Endothelial cell of umbilical vein (primary cell): ENCODE measurements at regions of chr15 and their contacts with region 1.

Region 1: DNA sequence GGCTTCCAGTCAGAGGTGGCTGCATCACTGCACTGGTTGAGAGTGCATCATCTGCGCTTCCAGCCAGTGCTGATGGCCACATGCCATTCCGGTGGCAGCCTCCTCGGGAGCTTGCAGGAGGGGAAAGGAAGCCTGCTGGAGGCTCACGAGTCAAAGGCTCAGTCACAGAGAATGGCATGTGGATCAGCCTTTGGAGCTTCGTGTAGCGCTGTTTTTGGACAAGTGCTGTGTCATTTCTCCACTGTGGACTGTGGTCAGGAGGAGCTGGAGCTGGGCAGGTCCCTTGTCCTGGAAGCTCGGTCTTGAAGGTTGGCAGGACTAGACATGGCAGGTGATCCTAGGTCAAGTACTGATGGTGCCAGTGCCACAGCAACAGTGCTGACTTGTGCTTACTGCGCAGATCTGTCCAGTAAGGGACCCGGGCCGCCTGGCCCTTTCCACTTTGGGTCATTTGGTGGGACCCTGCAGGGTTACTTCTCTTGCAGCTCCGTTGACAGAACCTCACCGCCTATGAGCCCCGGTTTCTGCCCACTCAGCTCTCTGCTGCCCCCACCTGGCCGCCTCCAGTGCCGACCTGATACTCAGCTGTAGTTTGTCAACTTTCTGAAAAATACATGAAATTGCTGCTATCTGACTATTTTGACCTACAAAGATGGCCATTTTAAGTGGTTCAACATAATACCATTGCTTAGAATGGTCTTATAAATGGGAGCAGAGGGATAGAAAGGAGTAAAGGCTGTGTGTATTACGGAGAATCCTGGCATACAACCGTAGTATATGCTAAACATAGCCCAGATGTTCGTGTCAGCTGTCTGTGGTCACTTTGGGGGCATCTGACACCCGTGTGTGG is 27.6 kb upstream of the TRPM1 start:
- DNase-seq: peak; percentile 78
- H3K4me3 ChIP-seq: no peak overlapping the region
- H3K27ac ChIP-seq: no peak overlapping the region
- H3K4me1 ChIP-seq: peaks cover 4% of the 10 kb centered on the region
- H3K27me3 ChIP-seq: peaks cover 0 to 3% of the 10 kb centered on the region in 2 experiments
- CTCF ChIP-seq: peak; percentile 93 to 96
- POLR2A ChIP-seq: no peak

Region 2: DNA sequence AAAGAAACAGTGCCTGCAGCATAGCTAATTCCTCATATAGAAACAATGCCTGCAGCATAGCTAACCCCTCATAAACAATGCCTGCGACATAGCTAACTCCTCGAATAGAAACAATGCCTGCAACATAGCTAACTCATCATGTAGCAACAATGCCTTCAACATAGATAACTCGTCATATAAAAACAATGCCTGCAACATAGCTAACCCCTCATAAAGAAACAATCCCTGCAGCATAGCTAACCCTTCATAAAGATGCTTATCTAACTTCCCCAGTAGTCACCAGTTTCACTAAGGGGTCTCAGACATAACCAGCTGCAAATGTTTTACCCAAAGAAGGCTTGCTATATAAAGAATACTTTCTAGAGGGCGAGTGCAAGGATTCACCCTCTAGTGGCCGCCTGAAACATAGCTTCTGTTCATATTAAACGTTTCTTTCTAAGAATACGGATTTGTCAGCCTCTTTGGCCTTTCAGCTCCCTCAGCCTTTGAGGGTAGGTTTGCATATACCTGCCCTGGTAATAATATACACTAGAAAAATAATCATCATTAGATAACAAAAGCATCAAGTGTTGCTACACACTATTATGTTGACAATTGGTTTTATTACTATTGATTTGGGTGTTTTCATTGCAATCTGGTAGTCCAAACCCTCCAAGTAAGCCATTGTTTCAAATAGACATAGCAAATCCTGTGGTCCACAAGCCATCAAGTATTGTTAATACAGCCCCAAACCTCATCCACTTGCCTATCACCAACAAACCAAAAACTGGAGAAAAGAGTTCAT is 269.9 kb before region 1 on chr15:
- CTCF ChIA-PET with region 1: interaction called, 29 read pairs
- POLR2A ChIA-PET with region 1: no interaction called
- dilution Hi-C with region 1: no loop called
- intact Hi-C with region 1: no loop called
- DNase-seq: peak; percentile 62
- H3K4me3 ChIP-seq: no peak overlapping the region
- H3K27ac ChIP-seq: no peak overlapping the region
- H3K4me1 ChIP-seq: no peaks in the 10 kb centered on the region
- H3K27me3 ChIP-seq: peaks cover 2 to 3% of the 10 kb centered on the region in 2 experiments
- CTCF ChIP-seq: peak; percentile 55 to 65
- POLR2A ChIP-seq: no peak

Region 3: DNA sequence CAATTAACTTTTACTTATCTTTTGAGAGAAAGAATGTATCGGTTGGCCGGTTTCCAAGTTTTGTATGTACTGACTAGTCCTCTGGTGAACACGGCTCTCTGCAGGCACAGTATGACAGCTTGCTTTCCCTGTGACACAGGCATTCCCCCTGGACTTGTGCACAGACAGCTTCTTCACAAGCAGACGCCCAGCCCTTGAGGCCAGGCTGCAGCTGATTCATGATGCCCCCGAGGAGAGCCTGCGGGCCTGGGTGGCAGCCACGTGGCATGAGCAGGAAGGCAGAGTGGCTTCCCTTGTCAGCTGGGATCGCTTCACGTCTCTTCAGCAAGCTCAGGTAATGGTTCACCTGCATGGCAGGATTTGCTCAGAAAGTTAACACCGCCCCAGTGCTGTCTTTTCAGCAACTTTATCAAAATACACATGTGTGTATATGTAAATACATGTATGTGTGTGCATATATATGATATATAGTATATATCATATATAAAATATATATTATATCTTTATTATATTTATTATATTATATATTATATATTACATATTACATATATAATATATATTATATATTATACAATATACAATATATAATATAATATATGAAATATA is 200.0 kb before region 1 on chr15:
- CTCF ChIA-PET with region 1: interaction called, 30 read pairs
- POLR2A ChIA-PET with region 1: no interaction called
- dilution Hi-C with region 1: no loop called
- intact Hi-C with region 1: no loop called
- DNase-seq: no peak
- H3K4me3 ChIP-seq: no peak overlapping the region
- H3K27ac ChIP-seq: no peak overlapping the region
- H3K4me1 ChIP-seq: no peaks in the 10 kb centered on the region
- H3K27me3 ChIP-seq: no peaks in the 10 kb centered on the region
- CTCF ChIP-seq: no peak
- POLR2A ChIP-seq: no peak

Region 4: GRCh38 chr15:30991255-30992072 is 137.7 kb before region 1 on chr15 and contains the start of gene MTMR10:
- CTCF ChIA-PET with region 1: interaction called, 175 read pairs
- POLR2A ChIA-PET with region 1: interaction called, 9 read pairs
- dilution Hi-C with region 1: no loop called
- intact Hi-C with region 1: loop called (anchors 2 kb)
- DNase-seq: peak; percentile 78
- H3K4me3 ChIP-seq: peak within 1 kb of the TSS; percentile 81 to 96 (median 91)
- H3K27ac ChIP-seq: peak within 1 kb of the TSS; percentile 88
- H3K4me1 ChIP-seq: peaks cover 31% of the 10 kb centered on the region
- H3K27me3 ChIP-seq: no peaks in the 10 kb centered on the region
- CTCF ChIP-seq: no peak
- POLR2A ChIP-seq: peak; percentile 93
- total RNA-seq, gene MTMR10: 65.5 and 88.5 TPM in 2 replicates

Region 5: GRCh38 chr15:31031471-31032067 is 97.6 kb before region 1 on chr15:
- CTCF ChIA-PET with region 1: interaction called, 18 read pairs
- POLR2A ChIA-PET with region 1: no interaction called
- dilution Hi-C with region 1: no loop called
- intact Hi-C with region 1: no loop called
- DNase-seq: peak; percentile 64
- H3K4me3 ChIP-seq: no peak overlapping the region
- H3K27ac ChIP-seq: peak overlapping the region; percentile 78
- H3K4me1 ChIP-seq: peaks cover 52% of the 10 kb centered on the region
- H3K27me3 ChIP-seq: no peaks in the 10 kb centered on the region
- CTCF ChIP-seq: no peak
- POLR2A ChIP-seq: no peak

Region 6: GRCh38 chr15:31145271-31145911 is 16.2 kb after region 1 on chr15:
- CTCF ChIA-PET with region 1: interaction called, 10 read pairs
- POLR2A ChIA-PET with region 1: no interaction called
- dilution Hi-C with region 1: no loop called
- intact Hi-C with region 1: no loop called
- DNase-seq: no peak
- H3K4me3 ChIP-seq: no peak overlapping the region
- H3K27ac ChIP-seq: no peak overlapping the region
- H3K4me1 ChIP-seq: no peaks in the 10 kb centered on the region
- H3K27me3 ChIP-seq: peaks cover 0 to 2% of the 10 kb centered on the region in 2 experiments
- CTCF ChIP-seq: no peak
- POLR2A ChIP-seq: no peak

Region 7: GRCh38 chr15:31254431-31255175 is 125.5 kb after region 1 on chr15:
- CTCF ChIA-PET with region 1: no interaction called
- POLR2A ChIA-PET with region 1: no interaction called
- dilution Hi-C with region 1: no loop called
- intact Hi-C with region 1: no loop called
- DNase-seq: peak; percentile 76
- H3K4me3 ChIP-seq: no peak overlapping the region
- H3K27ac ChIP-seq: no peak overlapping the region
- H3K4me1 ChIP-seq: no peaks in the 10 kb centered on the region
- H3K27me3 ChIP-seq: no peaks in the 10 kb centered on the region
- CTCF ChIP-seq: no peak
- POLR2A ChIP-seq: no peak

Region 8: DNA sequence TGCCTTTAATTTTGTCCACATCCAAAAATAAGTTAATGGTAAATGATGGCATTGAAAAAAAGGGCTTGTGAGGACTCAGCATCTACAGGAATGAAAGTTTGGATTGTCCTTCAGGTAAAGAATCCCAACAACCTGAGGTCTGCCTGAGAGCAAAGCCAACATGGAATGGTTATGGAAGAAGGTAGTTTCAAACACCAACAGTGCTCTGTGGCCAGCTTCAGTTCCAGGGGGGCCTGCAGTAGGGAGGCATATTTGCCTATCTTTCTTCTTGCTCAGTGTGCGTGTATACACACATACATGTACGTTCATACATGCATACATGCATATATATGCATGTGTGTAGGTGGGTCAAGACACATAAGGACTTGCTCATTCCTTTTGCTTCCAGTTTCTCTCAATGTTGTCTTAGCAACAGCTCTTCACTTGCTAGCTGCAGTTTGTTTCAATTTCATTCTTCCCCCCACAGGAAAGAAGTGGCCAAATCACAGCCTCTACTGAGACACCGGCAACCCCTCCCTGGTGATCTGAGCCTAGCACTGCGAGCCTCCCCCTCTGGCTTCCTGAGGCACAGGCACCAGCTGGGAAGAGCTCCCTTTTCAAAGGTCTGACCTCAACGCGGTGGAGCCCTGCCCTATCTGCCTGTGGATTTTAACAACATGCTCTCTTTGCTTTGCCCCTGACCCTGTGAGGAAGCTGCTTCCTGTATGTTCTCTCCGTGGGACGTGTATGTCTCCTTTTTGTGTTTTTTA is 343.7 kb after region 1 on chr15:
- CTCF ChIA-PET with region 1: no interaction called
- POLR2A ChIA-PET with region 1: no interaction called
- dilution Hi-C with region 1: no loop called
- intact Hi-C with region 1: no loop called
- DNase-seq: peak; percentile 10
- H3K4me3 ChIP-seq: no peak overlapping the region
- H3K27ac ChIP-seq: no peak overlapping the region
- H3K4me1 ChIP-seq: no peaks in the 10 kb centered on the region
- H3K27me3 ChIP-seq: peaks cover 2 to 5% of the 10 kb centered on the region in 2 experiments
- CTCF ChIP-seq: no peak
- POLR2A ChIP-seq: no peak